ENCODE measurements at regions of chr16 and their contacts with region 1.

Region 1: DNA sequence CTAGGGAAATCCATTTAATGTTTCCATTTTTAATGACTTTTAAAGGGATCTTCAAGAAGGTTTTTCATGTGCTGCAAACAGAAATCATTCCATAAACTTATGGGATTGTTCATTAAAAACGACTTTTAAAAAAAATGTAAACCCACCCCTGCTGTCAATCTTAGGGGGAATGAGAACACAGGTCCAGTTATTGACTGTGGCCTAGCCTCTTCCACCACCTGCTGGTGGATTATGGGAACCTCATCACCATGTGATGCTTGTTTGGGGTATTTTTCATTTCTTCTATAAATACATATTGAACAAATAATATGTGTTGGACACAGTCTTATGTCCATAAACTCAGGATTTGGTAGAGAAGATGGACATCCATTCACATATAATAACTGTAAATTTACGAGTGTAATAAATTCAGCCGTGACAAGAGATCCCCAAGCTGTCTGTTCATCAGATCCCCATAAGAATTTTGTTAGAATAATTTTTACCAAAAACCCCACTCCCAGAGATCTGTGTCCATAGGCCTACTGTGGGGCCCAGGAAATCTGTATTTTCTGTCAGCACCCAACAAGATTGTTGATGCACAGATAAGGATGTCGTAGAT is 42.0 kb upstream of the TMC5 start:
- DNase-seq: peak; percentile 65 to 70 (median 70)
- ATAC-seq: peak; percentile 78
- H3K4me3 ChIP-seq: no peak overlapping the region
- H3K27ac ChIP-seq: no peak overlapping the region
- H3K4me1 ChIP-seq: no peaks in the 10 kb centered on the region
- H3K27me3 ChIP-seq: no peaks in the 10 kb centered on the region
- CTCF ChIP-seq: peak; percentile 73 to 88 (median 73)
- EP300 ChIP-seq: no peak
- POLR2A ChIP-seq: no peak
- RAD21 ChIP-seq: peak; percentile 85 to 94

Region 2: GRCh38 chr16:18983565-18984424 is 391.9 kb before region 1 on chr16 and contains the start of gene TMC7:
- CTCF ChIA-PET with region 1: interaction called, 11 read pairs
- POLR2A ChIA-PET with region 1: no interaction called
- in situ Hi-C with region 1: loop called (anchors 10 kb)
- intact Hi-C with region 1: loop called (anchors 5 kb)
- DNase-seq: peak; percentile 87 to 92 (median 90)
- ATAC-seq: peak; percentile 100
- H3K4me3 ChIP-seq: peak within 1 kb of the TSS; percentile 73
- H3K27ac ChIP-seq: 0 out of 3 replicates have a peak within 1 kb of the TSS, but pooled peaks have one; percentile 23
- H3K4me1 ChIP-seq: peaks cover 0 to 7% of the 10 kb centered on the region in 2 experiments; a peak in 3 of 5 replicates
- H3K27me3 ChIP-seq: no peaks in the 10 kb centered on the region; a peak in 3 of 5 replicates
- CTCF ChIP-seq: peak; percentile 89 to 99 (median 99)
- EP300 ChIP-seq: 0 out of 2 replicates have a peak, but pooled peaks have one; percentile 21
- POLR2A ChIP-seq: no peak; the same call in 1 of the 2 replicates
- RAD21 ChIP-seq: peak; percentile 80 to 92
- polyA plus RNA-seq, gene TMC7: 0.08 to 0.32 TPM

Region 3: GRCh38 chr16:19179546-19180490 is 195.8 kb before region 1 on chr16:
- CTCF ChIA-PET with region 1: no interaction called
- POLR2A ChIA-PET with region 1: no interaction called
- in situ Hi-C with region 1: loop called (anchors 10 kb)
- intact Hi-C with region 1: loop called (anchors 10 kb)
- DNase-seq: peak; percentile 73 to 81 (median 78)
- ATAC-seq: peak; percentile 96
- H3K4me3 ChIP-seq: no peak overlapping the region
- H3K27ac ChIP-seq: no peak overlapping the region
- H3K4me1 ChIP-seq: no peaks in the 10 kb centered on the region
- H3K27me3 ChIP-seq: peaks cover 35 to 61% of the 10 kb centered on the region in 2 experiments
- CTCF ChIP-seq: peak; percentile 77 to 88 (median 86)
- EP300 ChIP-seq: no peak
- POLR2A ChIP-seq: no peak
- RAD21 ChIP-seq: peak; percentile 62 to 77

Region 4: DNA sequence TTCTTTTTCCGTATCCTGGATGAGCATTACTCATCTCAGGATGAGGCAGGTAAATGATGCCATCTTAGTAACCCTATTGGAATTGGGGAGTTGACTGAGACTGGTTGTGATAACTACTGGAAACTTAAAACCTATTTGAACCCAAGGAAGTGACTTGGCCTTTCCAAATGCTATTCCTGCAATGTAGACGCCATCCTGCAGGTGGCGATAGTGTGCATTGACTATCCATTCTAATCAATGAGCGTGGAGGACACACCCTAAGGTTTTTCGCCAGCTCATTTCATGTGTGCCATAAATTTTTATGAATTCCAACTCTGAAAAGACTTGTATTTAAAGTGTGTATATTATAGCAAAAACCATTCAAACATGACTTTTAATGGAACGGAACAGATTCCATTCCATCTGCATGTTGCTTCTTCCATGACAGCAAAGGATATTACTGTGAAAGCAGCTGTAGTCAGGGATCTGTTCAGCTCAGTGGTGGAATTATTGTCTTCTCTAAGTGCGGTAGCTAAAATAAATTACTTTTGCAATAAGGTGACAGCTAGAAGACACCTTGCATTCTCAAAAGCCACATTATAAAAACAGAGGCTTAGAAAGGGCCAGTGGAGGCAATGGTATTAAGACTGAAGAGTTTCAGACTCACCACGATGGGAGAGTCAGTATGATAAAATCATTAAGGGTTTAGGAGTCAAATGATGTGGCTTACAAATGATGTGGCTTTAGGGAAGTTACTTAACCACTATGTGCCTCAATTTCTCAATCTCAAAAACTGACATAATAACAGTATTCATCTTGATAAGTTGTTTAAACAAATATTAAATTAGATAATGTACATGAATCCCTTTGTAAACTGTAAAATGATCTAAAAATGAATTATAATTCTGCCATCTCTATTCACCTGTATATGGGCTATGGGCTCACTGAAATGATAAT is 152.2 kb before region 1 on chr16:
- CTCF ChIA-PET with region 1: interaction called, 3 read pairs
- POLR2A ChIA-PET with region 1: no interaction called
- in situ Hi-C with region 1: no loop called
- intact Hi-C with region 1: loop called (anchors 2 kb)
- DNase-seq: peak; percentile 35 to 66 (median 61)
- ATAC-seq: no peak
- H3K4me3 ChIP-seq: no peak overlapping the region
- H3K27ac ChIP-seq: no peak overlapping the region
- H3K4me1 ChIP-seq: no peaks in the 10 kb centered on the region
- H3K27me3 ChIP-seq: peaks cover 0 to 4% of the 10 kb centered on the region in 2 experiments; a peak in 1 of 5 replicates
- CTCF ChIP-seq: peak; percentile 57 to 82 (median 74)
- EP300 ChIP-seq: no peak
- POLR2A ChIP-seq: no peak
- RAD21 ChIP-seq: peak in 1 of 2 experiments; percentile 52; a peak in 2 of 4 replicates

Region 5: DNA sequence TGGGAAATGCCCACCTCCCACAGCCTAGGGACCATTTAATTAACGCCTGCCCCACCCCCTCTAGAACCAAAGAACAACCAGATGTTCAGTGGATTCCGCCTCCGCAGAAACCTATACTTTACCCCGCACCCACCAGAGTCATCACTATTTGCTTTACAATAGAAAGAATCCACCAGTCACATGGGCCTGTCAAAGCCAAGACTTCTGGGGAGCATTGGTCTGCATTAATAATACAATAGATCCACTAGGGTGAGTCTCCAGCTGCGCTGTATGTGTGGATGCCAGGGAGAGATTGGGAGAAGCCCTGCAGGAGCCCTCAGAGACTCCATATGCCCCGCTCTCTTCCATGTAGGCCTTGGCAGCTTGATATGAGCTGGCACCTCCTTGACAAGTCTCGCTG is 58.8 kb before region 1 on chr16:
- CTCF ChIA-PET with region 1: no interaction called
- POLR2A ChIA-PET with region 1: no interaction called
- in situ Hi-C with region 1: no loop called
- intact Hi-C with region 1: no loop called
- DNase-seq: no peak
- ATAC-seq: no peak
- H3K4me3 ChIP-seq: no peak overlapping the region
- H3K27ac ChIP-seq: no peak overlapping the region
- H3K4me1 ChIP-seq: no peaks in the 10 kb centered on the region
- H3K27me3 ChIP-seq: peaks cover 0 to 6% of the 10 kb centered on the region in 2 experiments; a peak in 2 of 5 replicates
- CTCF ChIP-seq: no peak
- EP300 ChIP-seq: no peak
- POLR2A ChIP-seq: no peak
- RAD21 ChIP-seq: no peak

Region 6: GRCh38 chr16:19808061-19808621 is 432.5 kb after region 1 on chr16:
- CTCF ChIA-PET with region 1: no interaction called
- POLR2A ChIA-PET with region 1: no interaction called
- in situ Hi-C with region 1: no loop called
- intact Hi-C with region 1: no loop called
- DNase-seq: no peak
- ATAC-seq: no peak
- H3K4me3 ChIP-seq: no peak overlapping the region
- H3K27ac ChIP-seq: no peak overlapping the region
- H3K4me1 ChIP-seq: no peaks in the 10 kb centered on the region
- H3K27me3 ChIP-seq: no peaks in the 10 kb centered on the region; a peak in 1 of 5 replicates
- CTCF ChIP-seq: no peak
- EP300 ChIP-seq: no peak
- POLR2A ChIP-seq: no peak
- RAD21 ChIP-seq: no peak